BJ (cell line): ENCODE measurements at regions of chr11 and their contacts with region 1.

Region 1: DNA sequence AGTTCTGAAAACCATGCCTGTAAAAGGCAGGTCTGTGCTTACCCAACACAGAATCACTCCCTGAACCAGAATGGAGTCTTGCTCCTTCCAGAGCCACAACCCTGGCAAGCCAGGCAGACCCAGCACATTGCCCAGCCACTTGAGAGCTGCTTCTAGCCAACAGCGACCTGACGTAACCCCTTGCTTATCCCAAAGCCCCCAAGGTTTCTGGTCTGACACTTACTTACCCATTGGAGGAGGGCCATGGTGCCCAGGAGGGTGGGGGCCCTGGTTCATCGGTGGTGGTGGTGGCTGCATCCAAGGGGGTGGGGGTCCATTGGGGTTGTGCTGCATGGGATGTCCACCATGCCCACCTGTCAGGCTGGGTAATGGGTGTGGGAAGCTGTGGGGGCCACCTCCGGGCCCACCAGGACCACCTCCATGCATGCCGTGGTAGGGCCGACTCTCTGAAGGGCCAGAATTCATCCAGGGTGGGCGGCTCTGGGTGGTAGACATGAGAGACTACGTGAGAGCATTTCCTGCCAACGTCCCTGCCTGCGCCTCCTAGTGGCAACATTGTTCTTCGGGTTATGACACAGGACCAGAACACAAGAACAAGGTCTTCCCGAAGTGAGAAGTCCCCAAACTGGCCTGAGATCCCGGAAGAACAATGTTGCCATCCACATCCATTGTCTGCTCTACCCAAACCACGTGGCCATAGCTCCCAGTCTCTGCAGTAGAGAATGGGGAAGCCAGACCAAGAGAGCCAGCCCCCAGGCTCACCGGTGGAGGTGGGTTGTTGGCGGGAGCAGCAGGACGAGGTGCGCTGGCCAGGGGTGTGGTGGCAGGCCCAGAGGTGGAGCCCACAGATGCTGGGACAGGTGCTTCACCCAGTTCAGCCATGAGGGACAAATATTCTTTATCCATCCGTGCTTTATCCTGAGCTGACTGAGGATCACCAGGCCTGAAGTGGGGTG is 7.8 kb upstream of the PYGM start:
- DNase-seq: no peak
- H3K4me3 ChIP-seq: no peak overlapping the region
- H3K27me3 ChIP-seq: no peaks in the 10 kb centered on the region
- CTCF ChIP-seq: peak; percentile 79

Region 2: DNA sequence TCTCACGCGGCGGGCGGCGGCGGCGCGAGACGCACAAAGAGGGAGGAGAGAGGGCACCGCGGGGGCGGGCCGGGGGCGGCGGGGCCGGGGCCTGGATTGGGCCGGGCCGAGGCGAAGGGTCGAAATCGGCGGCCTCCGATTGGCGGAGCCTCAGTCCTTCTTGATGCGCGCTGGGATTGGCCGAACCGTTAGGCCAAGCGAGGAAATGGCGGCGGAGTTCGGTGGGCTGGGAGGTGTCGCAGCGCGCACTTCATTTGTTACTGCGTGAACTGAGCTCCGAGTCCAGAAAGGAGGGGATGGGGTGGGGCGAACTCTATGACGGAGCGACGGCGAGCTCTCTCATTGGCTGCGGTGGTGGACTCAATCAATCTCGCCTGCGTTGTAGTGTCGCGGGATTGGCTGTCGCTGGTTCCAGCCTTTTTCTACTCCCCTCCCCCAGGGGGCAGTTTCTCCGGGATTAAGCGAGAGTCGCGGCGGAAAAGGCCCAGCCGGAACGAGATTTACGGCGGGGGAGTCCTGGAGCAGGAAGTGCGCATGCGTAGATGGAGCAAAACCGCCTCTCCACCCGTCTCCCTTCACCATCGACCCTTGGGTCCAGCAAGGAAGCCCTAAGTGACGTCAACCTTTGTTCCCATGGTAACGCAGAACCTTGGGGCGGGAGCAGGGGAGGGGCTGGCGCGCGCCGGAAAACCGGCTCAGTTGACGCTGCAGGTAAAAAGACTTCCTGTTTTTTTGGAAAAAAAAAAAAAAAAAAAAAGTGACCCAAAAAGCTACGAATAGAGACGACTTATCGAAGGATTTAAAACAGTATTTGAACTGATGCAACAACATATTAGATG is 11.1 kb after region 1 on chr11 and contains the start of gene SF1:
- CTCF ChIA-PET with region 1: interaction called, 13 read pairs
- POLR2A ChIA-PET with region 1: interaction called, 12 read pairs
- DNase-seq: peak; percentile 99
- H3K4me3 ChIP-seq: peak within 1 kb of the TSS; percentile 55
- H3K27me3 ChIP-seq: no peaks in the 10 kb centered on the region
- CTCF ChIP-seq: no peak
- polyA plus RNA-seq, gene SF1: 40.3 and 41.7 TPM in 2 replicates